Right ventricle myocardium inferior (tissue), 1 donor: ENCODE measurements at regions of chr2 and their contacts with region 1.

Region 1: DNA sequence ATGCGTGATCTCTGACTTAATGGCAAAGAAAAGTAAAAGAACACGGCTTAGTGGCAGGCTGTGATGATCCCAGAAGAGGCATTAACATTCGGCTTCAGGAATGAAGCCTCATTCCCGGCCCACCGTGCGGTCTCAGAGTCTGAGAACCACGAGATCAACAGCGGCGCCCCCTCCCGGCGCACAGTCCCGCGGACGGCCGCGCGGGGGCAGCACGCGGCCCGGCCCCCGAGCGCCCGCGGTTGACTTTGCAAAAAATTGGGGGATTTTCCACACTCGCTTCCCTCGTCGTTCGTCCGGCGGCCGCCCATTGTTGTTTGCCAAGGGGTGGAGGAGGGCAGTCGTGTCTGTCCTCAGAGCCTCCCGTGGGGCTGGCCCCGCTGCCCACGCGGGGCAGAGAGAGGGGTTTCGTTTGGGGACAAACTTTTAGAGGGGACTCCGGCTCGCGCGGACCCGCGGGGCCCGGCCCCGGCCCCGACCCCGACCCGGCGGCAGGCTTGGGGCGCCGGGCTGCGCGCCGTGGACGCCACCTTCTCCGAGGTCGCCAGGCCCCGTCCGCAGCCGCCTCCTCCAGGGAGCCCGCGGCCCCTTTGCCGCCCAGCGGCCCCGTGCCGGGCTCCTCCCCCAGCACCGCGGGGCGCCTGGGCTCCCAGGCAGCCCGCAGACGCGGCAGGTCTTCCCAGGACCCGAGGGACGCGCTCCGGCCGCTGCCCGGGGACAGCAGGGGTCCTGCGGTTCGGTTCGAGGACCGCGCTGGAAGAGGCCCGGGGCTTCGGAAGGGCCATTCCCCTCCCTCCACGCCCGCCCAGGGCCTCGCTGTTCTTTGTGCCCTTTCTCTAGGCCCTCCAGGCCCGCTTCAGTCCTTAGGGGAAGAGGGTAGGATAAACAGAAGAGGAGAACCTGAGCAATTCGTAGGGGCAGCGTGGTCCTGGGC is 3.4 kb upstream of the HS6ST1 start:
- DNase-seq: peak; percentile 92
- ATAC-seq: peak; percentile 78

Region 2: GRCh38 chr2:128379021-128380015 is 57.3 kb after region 1 on chr2:
- intact Hi-C with region 1: loop called (anchors 2 kb)
- DNase-seq: no peak
- ATAC-seq: peak; percentile 90

Region 3: GRCh38 chr2:128442053-128442751 is 120.2 kb after region 1 on chr2:
- intact Hi-C with region 1: loop called (anchors 5 kb)
- DNase-seq: no peak
- ATAC-seq: no peak

Region 4: GRCh38 chr2:128494640-128495321 is 172.7 kb after region 1 on chr2:
- intact Hi-C with region 1: loop called (anchors 2 kb)
- DNase-seq: no peak
- ATAC-seq: peak; percentile 86

Region 5: GRCh38 chr2:128531856-128532255 is 209.8 kb after region 1 on chr2:
- intact Hi-C with region 1: loop called (anchors 5 kb)
- DNase-seq: no peak
- ATAC-seq: no peak